A549 (cell line): ENCODE measurements at regions of chr4 and their contacts with region 1.

Region 1: GRCh38 chr4:128454281-128455075 is 166.9 kb upstream of the PGRMC2 start:
- DNase-seq: peak; percentile 89 to 92
- ATAC-seq: peak; percentile 93 to 96
- H3K4me3 ChIP-seq: no peak overlapping the region
- H3K27ac ChIP-seq: peak overlapping the region; percentile 96
- H3K4me1 ChIP-seq: peaks cover 83% of the 10 kb centered on the region
- CTCF ChIP-seq: peak; percentile 69
- EP300 ChIP-seq: peak; percentile 27 to 51; a peak in 1 of 5 replicates
- POLR2A ChIP-seq: no peak
- RAD21 ChIP-seq: peak; percentile 86 to 91

Region 2: DNA sequence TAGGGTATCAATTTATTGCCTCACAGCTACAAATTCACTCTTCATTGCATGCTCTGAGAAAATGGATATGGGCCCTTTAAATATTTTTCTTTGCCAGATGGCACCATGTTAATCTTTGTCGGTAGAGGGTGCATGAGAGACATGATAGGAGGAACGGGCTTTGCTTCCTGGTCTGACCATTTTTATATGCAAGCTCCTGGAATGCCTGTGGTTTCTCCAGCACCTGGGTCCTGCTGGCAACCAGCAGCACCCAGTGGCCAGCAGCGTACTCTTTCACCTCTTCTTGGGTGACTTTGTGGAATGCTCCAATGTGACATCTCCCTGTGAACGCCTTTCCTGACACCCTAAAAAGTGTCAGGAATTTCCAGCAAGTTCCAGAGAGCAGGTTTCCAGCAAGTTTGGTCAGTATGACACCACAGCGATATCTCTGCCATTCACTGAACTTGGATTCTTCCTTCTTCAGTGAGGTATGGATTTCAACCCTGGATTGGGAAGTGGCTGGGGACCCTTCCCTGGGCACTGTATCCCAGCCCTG is 26.6 kb before region 1 on chr4:
- CTCF ChIA-PET with region 1: interaction called, 14 read pairs
- POLR2A ChIA-PET with region 1: no interaction called
- DNase-seq: peak; percentile 79 to 94
- ATAC-seq: peak; percentile 100
- H3K4me3 ChIP-seq: peak overlapping the region; percentile 52
- H3K27ac ChIP-seq: peak overlapping the region; percentile 96 to 97
- H3K4me1 ChIP-seq: peaks cover 5% of the 10 kb centered on the region
- CTCF ChIP-seq: peak; percentile 73
- EP300 ChIP-seq: 0 out of 5 replicates have a peak, but pooled peaks of 1 of the 2 experiments have one; percentile 15
- POLR2A ChIP-seq: no peak
- RAD21 ChIP-seq: peak; percentile 90 to 94

Region 3: DNA sequence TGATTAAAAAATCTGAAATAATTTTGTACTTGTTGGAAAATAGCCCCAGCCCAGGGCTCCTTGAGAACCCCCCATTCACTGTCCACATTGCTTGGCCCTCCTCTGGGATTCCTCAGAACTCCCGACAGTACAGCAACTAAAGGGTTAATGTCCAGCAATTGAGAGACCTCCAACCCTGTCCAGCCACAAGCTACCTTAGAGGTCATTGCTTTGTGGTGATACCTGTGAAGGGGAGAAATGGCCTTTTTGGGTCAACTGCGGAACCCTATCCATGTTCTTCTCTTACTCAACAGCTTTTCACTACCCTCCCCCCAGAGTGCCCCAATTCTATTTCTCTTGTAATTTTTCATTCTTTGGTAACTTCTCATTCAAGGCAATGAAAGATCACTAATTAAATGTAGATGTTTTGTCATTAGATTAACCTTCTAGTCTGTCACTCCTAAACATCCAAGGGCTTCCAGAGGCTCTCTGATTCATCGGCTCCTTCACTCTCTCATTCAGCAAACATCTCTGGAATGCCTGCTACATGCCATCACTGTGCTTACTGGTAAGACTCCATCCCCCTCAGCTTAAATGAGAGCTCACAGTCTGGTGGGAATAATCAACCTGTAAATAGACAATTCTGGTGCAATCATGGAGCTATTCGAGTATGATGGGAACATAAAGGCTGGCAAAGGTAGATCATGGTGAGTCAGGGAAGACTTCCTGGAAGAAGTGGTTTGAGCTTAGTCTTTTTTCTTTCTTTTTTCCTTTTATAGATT is 74.5 kb after region 1 on chr4:
- CTCF ChIA-PET with region 1: interaction called, 11 read pairs
- POLR2A ChIA-PET with region 1: no interaction called
- DNase-seq: peak; percentile 78 to 95
- ATAC-seq: peak; percentile 97 to 99
- H3K4me3 ChIP-seq: no peak overlapping the region
- H3K27ac ChIP-seq: peak overlapping the region; percentile 95 to 99
- H3K4me1 ChIP-seq: peaks cover 59% of the 10 kb centered on the region
- CTCF ChIP-seq: no peak
- EP300 ChIP-seq: peak; percentile 86 to 92; a peak in 4 of 5 replicates
- POLR2A ChIP-seq: no peak
- RAD21 ChIP-seq: peak; percentile 30 to 42; a peak in 3 of 5 replicates

Region 4: GRCh38 chr4:128553686-128554515 is 99.4 kb after region 1 on chr4:
- CTCF ChIA-PET with region 1: interaction called, 12 read pairs
- POLR2A ChIA-PET with region 1: interaction called, 9 read pairs
- DNase-seq: peak in 1 of 2 experiments; percentile 74
- ATAC-seq: peak; percentile 34 to 44; a peak in 5 of 6 replicates
- H3K4me3 ChIP-seq: peak overlapping the region; percentile 28; the same call in 2 of the 3 replicates
- H3K27ac ChIP-seq: peak overlapping the region; percentile 99 to 100
- H3K4me1 ChIP-seq: peaks cover 53% of the 10 kb centered on the region
- CTCF ChIP-seq: no peak
- EP300 ChIP-seq: peak in 1 of 2 experiments; percentile 79; a peak in 2 of 5 replicates
- POLR2A ChIP-seq: no peak
- RAD21 ChIP-seq: no peak; a peak in 2 of 5 replicates

Region 5: DNA sequence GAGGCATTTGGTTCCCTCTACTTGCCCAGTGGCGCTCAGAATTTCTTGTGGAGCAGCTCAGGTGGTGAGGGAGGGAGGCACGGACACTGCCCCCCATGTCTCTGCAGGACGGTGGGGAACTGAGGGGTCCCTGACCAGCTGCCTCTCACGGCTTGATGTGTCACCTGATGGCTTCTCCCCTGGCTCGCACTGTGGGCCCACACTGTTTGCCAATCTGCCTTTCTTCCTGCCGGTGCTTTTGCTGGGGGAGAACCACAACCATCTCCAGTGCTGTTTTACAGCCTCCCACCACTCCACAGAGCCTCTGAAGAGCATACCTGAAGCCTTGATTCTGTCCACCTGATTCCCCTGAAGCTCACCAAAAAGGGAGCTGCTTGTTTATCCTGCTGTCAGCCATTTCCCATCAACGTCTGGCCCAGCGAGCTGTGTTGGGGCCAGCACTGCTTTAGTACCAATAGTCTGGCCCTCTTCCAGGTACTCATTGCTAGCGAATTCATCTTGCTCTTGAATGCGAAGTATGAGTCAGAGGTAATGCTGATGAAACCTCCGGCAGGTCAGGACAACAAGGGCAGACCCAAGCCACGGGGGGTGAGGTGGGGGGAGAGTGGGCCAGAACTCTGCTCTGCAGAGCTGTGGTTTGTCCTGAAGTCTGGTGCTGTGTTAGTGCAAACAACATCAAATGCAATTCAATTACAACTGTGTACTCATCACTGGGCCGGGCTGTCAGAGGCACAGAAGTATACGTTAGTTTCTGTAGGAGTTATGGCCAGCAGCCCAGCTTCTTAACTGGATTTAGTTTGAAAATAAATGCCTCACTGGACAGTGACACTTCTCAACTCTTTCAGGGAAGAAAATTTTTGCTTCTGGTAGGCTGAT is 146.8 kb after region 1 on chr4:
- CTCF ChIA-PET with region 1: interaction called, 13 read pairs
- POLR2A ChIA-PET with region 1: interaction called, 3 read pairs
- DNase-seq: peak; percentile 48 to 94
- ATAC-seq: peak; percentile 89 to 92
- H3K4me3 ChIP-seq: no peak overlapping the region
- H3K27ac ChIP-seq: peak overlapping the region; percentile 85 to 98
- H3K4me1 ChIP-seq: peaks cover 81% of the 10 kb centered on the region
- CTCF ChIP-seq: no peak
- EP300 ChIP-seq: peak; percentile 83 to 88; a peak in 4 of 5 replicates
- POLR2A ChIP-seq: no peak
- RAD21 ChIP-seq: peak in 1 of 2 experiments; percentile 59; a peak in 2 of 5 replicates

Region 6: GRCh38 chr4:128768373-128768996 is 314.0 kb after region 1 on chr4:
- CTCF ChIA-PET with region 1: no interaction called
- POLR2A ChIA-PET with region 1: no interaction called
- DNase-seq: no peak
- ATAC-seq: 0 out of 6 replicates have a peak, but pooled peaks of 1 of the 2 experiments have one; percentile 25
- H3K4me3 ChIP-seq: no peak overlapping the region
- H3K27ac ChIP-seq: peak overlapping the region in 1 of 2 experiments; percentile 53; a peak in 2 of 6 replicates
- H3K4me1 ChIP-seq: no peaks in the 10 kb centered on the region
- CTCF ChIP-seq: no peak
- EP300 ChIP-seq: no peak
- POLR2A ChIP-seq: no peak
- RAD21 ChIP-seq: no peak

Region 7: GRCh38 chr4:128809477-128810330 is 355.2 kb after region 1 on chr4 and contains the start of gene JADE1:
- CTCF ChIA-PET with region 1: interaction called, 11 read pairs
- POLR2A ChIA-PET with region 1: interaction called, 10 read pairs
- DNase-seq: peak; percentile 79 to 94
- ATAC-seq: peak; percentile 71 to 76
- H3K4me3 ChIP-seq: peak within 1 kb of the TSS; percentile 85
- H3K27ac ChIP-seq: peak within 1 kb of the TSS; percentile 96 to 100
- H3K4me1 ChIP-seq: peaks cover 19% of the 10 kb centered on the region
- CTCF ChIP-seq: peak; percentile 71
- EP300 ChIP-seq: peak; percentile 26 to 41; a peak in 2 of 5 replicates
- POLR2A ChIP-seq: peak; percentile 31
- RAD21 ChIP-seq: peak; percentile 85 to 95
- polyA plus RNA-seq, gene JADE1: 46.7 and 54.6 TPM in 2 replicates